Pancreas (tissue), 10 donors: ENCODE measurements at regions of chr11 and their contacts with region 1.

Region 1: GRCh38 chr11:112289588-112290492 is 29.2 kb upstream of the PLET1 start:
- DNase-seq: peak; percentile 50 to 92 (median 74)
- ATAC-seq: peak; percentile 95 to 99 (median 97)
- H3K4me3 ChIP-seq: peak overlapping the region; percentile 9 to 59 (median 39)
- H3K27ac ChIP-seq: no peak overlapping the region
- H3K4me1 ChIP-seq: peaks cover 4 to 11% (median 7%) of the 10 kb centered on the region in 3 donors
- H3K27me3 ChIP-seq: no peaks in the 10 kb centered on the region
- CTCF ChIP-seq: peak; percentile 64 to 78 (median 69)

Region 2: DNA sequence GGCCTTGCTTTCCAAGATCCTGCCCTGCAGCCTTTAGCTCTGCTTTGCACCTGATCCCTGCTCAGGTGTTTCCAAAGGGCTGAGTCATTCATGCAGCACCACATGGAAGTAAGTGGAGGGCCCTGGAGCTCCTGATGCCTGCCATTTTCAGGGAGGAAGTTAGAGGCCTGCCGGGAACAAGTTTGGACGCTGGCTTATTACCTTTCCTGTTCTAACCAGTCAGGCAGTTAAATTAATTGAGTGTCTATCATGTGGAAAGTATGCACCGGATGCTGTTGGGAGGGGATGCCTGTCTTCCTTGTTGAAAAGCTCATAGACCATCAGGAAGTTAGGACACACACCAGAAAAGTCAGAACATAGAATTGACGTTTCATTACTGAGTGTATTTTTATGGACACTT is 44.5 kb after region 1 on chr11:
- intact Hi-C with region 1: no loop called
- DNase-seq: no peak
- ATAC-seq: peak in 1 of 4 donors; percentile 55
- H3K4me3 ChIP-seq: no peak overlapping the region
- H3K27ac ChIP-seq: no peak overlapping the region
- H3K4me1 ChIP-seq: no peaks in the 10 kb centered on the region
- H3K27me3 ChIP-seq: no peaks in the 10 kb centered on the region
- CTCF ChIP-seq: no peak

Region 3: GRCh38 chr11:112392904-112393303 is 103.1 kb after region 1 on chr11:
- intact Hi-C with region 1: no loop called
- DNase-seq: no peak
- ATAC-seq: no peak
- H3K4me3 ChIP-seq: no peak overlapping the region
- H3K27ac ChIP-seq: no peak overlapping the region
- H3K4me1 ChIP-seq: no peaks in the 10 kb centered on the region
- H3K27me3 ChIP-seq: no peaks in the 10 kb centered on the region
- CTCF ChIP-seq: no peak

Region 4: DNA sequence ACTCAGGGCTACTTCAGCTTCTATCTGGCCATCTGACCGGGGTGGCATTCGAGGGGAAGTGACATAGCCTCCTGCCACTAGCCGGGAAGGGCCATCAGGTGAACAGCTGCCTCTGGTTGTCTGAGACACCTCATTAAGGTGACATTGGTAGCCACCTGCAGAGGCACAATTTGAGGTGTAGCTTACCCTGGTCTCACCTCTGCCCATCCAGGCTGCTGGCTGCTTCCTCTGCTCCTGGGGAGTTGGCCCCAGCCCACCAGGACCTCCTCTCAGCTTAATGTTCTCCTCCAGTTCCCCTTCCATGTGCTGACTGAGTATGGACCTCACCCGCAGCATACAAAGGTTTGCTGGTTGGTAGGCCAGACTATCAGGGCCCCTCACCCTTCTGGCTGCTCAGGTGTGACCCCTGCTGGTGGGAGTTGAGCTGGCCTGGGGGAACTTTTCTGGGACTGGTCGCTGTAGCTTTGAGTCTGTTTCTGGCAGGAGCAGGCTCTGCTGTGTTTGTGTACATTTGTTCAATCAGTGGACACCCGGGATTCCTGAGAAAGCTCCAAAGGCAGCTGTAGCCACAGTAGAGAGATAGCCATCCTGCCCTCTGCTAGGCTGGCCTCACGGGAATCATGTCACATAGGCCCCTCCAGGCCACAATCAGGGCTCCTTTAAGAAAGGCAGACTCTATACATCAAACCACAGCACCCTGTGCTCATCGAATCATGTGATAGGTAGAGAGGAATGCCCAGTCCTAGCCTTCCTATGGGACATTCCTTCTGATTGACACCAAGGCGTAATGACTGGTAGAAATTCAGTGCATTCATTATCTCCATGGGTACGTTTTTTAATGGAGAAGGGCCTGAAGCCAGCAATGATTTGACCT is 265.9 kb after region 1 on chr11:
- intact Hi-C with region 1: loop called in 2 of 3 experiments (anchors 5 to 10 kb)
- DNase-seq: peak; percentile 28 to 87 (median 60)
- ATAC-seq: peak; percentile 61 to 90 (median 86)
- H3K4me3 ChIP-seq: no peak overlapping the region
- H3K27ac ChIP-seq: no peak overlapping the region
- H3K4me1 ChIP-seq: no peaks in the 10 kb centered on the region
- H3K27me3 ChIP-seq: no peaks in the 10 kb centered on the region
- CTCF ChIP-seq: peak; percentile 51 to 62 (median 58)

Region 5: GRCh38 chr11:113289431-113290187 is 999.8 kb after region 1 on chr11:
- intact Hi-C with region 1: loop called in 2 of 3 experiments (anchors 5 kb)
- DNase-seq: peak; percentile 30 to 84 (median 65)
- ATAC-seq: peak; percentile 67 to 98 (median 94)
- H3K4me3 ChIP-seq: no peak overlapping the region
- H3K27ac ChIP-seq: no peak overlapping the region
- H3K4me1 ChIP-seq: no peaks in the 10 kb centered on the region
- H3K27me3 ChIP-seq: peaks cover 0 to 6% (median 0%) of the 10 kb centered on the region in 4 donors
- CTCF ChIP-seq: peak; percentile 71 to 90 (median 89)